Activated CD4-positive, alpha-beta memory T cell treated with anti-CD3 and anti-CD28 coated beads, Interleukin-2, amount 10 ng/mL, durations not matched to agents 7 days and 5 days (primary cell): ENCODE measurements at regions of chr10 and their contacts with region 1.

Region 1: DNA sequence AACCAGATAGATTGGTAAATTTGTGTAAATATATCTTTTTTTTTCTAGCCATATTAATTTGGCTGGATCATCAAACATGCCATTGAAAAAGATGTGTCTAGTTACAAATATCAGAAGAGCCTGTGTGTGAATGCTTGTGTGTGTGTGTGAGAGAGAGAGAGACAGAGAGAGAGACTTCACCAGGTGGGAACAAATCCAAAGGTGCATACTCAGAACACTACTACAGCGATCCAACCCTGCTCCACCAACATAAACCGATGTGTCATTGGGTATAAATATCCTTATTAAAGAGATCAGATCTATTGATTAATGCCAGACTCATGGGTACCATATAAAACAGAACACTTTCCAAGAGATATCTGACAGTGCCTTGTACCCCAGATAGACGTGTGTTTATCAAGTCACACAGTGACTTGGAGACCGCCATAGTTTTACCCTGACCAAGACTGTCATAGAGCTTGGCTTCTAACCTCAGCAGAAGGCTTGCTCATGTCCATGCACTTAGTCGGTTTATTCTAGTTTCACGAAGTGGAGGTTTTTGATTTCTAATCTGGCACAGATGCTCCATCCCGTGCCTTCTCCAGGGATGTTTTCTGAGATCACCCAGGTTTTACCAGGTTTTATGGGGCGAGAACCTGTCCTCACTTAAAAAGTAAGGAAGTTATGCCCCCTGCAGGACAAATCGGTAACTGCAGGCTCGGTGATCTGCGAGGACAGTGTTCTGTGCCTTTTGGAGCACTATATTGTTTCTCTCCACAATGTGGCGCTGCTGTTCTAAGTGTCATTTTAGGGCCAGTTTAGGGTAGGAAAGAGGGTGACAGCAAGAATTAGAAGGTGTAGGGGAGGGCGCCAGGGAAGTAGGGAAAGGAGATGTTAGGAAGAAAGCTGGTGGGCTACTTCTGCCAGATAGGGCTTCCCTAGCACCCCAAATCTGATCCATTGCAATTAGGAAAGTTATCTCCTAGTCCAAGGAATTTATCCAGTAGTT is 29.3 kb upstream of the WNT8B start:
- DNase-seq: peak; percentile 97
- H3K4me3 Mint-ChIP-seq: no peak overlapping the region
- H3K27ac Mint-ChIP-seq: no peak overlapping the region
- H3K4me1 Mint-ChIP-seq: peaks cover 6% of the 10 kb centered on the region
- H3K27me3 Mint-ChIP-seq: no peaks in the 10 kb centered on the region

Region 2: DNA sequence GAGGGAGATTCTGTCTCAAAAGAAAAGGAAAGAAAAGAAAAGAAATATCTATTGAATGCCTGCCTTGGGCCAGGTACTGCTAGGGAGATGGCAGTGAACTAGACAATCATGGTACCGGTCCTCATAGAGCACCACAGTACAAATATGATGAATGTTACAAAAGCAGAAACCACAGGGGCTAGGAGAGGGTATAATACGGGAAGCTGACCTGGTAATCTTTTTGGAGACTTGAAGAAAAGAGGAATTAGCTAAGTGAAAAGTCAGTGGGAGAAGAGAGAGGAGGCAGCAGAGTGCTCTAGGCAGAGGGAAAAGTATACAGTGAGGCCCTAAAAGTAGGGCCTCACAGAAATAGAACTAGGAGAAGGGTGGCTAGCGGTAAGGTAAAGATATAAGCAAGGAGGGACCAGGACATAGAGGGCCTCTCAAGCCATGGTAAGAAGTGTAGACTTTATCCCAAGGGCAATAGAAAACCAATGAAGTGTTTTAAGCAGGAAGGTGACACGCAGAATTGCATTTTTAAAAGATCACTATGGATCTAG is 13.6 kb before region 1 on chr10:
- CTCF ChIA-PET with region 1: interaction called, 10 read pairs
- POLR2A ChIA-PET with region 1: no interaction called
- DNase-seq: no peak
- H3K4me3 Mint-ChIP-seq: no peak overlapping the region
- H3K27ac Mint-ChIP-seq: no peak overlapping the region
- H3K4me1 Mint-ChIP-seq: no peaks in the 10 kb centered on the region
- H3K27me3 Mint-ChIP-seq: peaks cover 17% of the 10 kb centered on the region

Region 3: DNA sequence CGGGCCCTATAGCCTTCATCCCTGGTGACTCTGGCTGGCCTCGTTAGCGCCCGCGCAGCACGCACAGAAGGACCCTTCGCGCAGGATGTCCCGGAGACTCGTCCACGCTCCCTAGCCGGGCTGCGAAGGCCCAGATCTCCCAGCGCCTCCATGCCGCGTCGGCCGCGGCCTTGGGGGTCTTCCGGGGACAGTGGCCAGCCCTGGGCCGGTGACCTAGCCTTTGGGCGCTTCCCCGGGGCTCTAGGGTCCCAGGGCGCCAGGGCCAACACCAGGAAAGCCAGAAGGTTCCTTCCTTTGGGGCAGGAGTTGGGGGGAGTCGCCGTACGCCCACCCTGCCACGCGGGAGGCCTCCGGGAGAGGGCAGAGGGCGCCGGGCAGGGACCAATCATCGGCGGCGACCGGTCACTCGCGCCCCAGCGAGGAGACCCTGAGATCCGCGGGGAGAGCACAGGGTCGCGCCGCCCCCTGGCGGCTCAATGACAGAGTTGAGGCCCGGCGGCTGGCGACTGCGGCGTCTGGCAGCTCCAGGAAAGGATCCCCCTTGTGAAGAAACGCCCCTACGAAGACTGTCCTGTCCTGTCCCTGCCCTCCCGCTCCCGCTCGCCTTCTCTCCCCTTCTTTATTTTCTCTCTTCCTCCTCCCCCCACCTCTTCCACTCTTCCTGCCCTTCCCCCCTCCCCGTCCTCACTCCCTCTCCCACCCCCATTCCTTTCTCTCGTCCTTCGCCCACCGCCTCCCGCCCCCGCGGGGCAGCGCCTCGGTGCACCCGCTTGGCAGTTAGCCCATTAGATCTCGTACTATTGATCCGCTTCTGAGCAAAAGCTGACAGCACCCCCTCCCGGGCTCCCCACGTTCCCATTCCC is 858.0 kb after region 1 on chr10:
- CTCF ChIA-PET with region 1: no interaction called
- POLR2A ChIA-PET with region 1: no interaction called
- DNase-seq: peak; percentile 33
- H3K4me3 Mint-ChIP-seq: peak overlapping the region; percentile 24
- H3K27ac Mint-ChIP-seq: no peak overlapping the region
- H3K4me1 Mint-ChIP-seq: peaks cover 6% of the 10 kb centered on the region
- H3K27me3 Mint-ChIP-seq: peaks cover 72% of the 10 kb centered on the region